Left cardiac atrium (tissue), 4 donors: ENCODE measurements at regions of chr13 and their contacts with region 1.

Region 1: DNA sequence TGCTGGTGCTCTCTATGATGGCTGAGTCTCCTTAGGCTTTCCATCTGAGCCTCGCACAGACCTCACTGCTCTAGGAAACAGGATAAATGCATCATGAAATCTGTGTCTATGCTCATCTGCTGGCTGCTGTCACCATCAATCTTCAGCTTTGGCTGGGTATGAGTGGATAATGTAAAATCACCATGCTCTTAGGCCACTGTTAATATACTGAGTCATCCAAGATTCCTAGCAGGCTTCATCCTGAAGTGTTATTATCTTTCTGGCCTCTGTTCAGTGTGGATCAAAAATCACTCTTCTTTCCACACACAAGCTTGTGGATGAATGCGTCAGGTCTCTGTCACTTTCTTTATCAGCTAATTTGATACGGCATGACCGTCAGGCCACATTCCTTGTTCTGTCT is 317.4 kb downstream of the NALCN start:
- DNase-seq: no peak
- ATAC-seq: peak; percentile 90 to 94

Region 2: GRCh38 chr13:100721885-100722512 is 376.9 kb before region 1 on chr13:
- intact Hi-C with region 1: loop called (anchors 5 to 10 kb)
- DNase-seq: peak; percentile 39
- ATAC-seq: peak in 1 of 2 donors; percentile 44

Region 3: GRCh38 chr13:100904293-100904976 is 194.4 kb before region 1 on chr13:
- intact Hi-C with region 1: no loop called
- DNase-seq: no peak
- ATAC-seq: no peak